OCI-LY7 (cell line): ENCODE measurements at regions of chr20 and their contacts with region 1.

Region 1: DNA sequence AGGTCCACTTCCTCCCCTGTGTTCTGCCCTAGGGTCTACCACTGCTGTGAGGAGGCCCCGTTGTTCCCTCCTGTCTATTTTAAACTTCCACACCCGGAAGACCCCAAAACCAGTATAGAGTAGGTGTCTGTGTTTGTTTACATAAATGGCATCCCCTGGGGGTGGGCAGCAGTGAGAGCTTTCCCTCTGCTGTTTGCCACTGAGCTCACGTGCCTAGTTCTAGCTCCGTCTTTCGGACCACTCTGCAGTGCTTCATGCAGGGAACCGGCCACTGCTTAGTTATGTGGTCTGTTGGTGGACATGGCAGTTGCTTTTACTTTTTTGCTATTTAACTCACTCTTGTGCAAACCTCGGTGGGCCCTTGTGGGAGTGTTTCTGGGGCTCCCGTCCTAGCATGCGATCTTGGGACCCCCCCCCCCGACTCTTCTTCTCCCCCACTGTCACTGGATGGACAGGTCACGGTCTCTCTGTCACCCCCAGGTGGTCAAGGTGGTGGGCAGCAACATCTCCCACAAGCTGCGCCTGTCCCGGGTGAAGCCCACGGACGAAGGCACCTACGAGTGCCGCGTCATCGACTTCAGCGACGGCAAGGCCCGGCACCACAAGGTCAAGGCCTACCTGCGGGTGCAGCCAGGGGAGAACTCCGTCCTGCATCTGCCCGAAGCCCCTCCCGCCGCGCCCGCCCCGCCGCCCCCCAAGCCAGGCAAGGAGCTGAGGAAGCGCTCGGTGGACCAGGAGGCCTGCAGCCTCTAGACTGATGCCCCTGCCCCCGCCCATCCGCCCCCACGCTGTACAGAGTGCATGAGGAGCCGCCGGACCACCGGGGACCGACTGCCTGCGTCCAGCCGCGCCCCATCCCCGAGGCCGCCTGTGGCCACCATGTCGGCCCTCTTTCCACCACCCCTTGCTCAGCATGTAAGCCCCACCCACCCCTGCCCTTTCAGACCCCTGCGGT is 40.9 kb downstream of the VSTM2L start:
- DNase-seq: no peak
- H3K4me3 ChIP-seq: no peak overlapping the region
- H3K27ac ChIP-seq: no peak overlapping the region
- H3K4me1 ChIP-seq: peaks cover 4% of the 10 kb centered on the region
- CTCF ChIP-seq: no peak

Region 2: GRCh38 chr20:36264426-36265246 is 1679.1 kb before region 1 on chr20:
- CTCF ChIA-PET with region 1: interaction called, 12 read pairs
- POLR2A ChIA-PET with region 1: no interaction called
- intact Hi-C with region 1: no loop called
- DNase-seq: no peak
- H3K4me3 ChIP-seq: no peak overlapping the region
- H3K27ac ChIP-seq: no peak overlapping the region
- H3K4me1 ChIP-seq: no peaks in the 10 kb centered on the region
- CTCF ChIP-seq: no peak

Region 3: DNA sequence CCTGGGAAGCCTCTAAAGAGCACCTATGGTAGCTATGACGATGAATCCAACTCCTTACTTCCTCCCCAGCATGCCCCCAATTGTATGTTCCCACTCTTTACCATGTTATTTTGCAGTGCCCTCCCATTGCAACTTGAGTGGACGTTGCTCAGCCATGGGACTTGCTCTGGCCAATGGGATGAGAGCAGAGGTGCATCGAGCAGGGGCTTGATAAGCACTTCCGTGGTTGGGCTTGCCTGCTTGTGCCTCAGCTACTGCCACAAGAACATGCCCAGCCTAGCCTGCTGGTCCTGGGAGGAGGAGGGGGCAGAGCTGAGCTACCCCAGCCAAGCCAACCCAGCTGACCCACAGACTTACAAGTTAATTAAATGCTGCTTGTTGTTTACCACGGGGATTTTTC is 321.1 kb before region 1 on chr20:
- CTCF ChIA-PET with region 1: no interaction called
- POLR2A ChIA-PET with region 1: no interaction called
- intact Hi-C with region 1: no loop called
- DNase-seq: no peak
- H3K4me3 ChIP-seq: no peak overlapping the region
- H3K27ac ChIP-seq: no peak overlapping the region
- H3K4me1 ChIP-seq: no peaks in the 10 kb centered on the region
- CTCF ChIP-seq: no peak